ENCODE measurements at regions of chr4 and their contacts with region 1.

Region 1: DNA sequence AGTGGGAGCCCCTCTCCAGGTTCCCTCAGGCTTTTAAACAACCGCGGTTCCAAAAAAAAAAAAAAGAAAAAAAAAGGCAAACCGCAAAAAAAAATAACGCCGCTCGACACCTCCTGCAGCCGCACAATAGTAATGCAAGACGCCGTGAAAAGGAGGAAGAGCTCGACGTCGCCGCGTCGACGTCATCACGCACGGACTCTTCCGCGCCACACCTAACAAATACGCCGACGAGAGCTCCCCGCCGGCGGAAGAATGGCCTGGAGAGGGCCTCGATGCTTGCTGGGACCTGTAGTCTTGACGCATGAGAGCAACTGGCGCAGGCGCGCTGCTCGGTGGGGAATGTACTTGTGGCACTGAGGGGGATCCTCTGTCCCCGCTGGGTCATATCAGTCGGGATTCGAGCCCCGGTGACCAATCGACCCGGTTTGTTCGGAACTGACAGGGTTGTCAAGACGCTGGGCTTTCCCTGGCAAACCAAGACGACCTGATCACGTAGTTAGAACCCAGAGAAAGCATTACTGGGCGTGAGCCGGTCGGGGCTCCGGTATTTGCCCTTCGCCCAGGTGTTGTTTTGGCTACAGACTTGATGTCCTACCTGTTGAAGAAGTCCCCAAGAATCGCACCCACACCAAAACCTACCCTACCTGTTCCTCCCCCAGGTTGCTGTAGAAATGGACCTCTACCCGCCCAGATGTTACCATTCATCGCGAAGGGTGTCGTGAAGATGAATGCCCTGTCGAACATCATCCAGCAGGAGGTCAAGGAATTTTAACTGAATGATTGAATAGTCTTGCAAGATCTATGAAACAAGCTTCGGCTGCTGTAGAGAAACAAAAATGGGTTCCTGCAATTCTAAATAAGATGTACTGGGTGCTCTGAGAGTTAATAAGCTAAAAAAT is at the start of gene CBR4:
- DNase-seq: peak; percentile 99
- H3K4me3 ChIP-seq: peak within 1 kb of the TSS; percentile 49 to 91 (median 90)
- H3K27ac ChIP-seq: peak within 1 kb of the TSS; percentile 65
- H3K4me1 ChIP-seq: peaks cover 19% of the 10 kb centered on the region
- H3K27me3 ChIP-seq: no peaks in the 10 kb centered on the region
- CTCF ChIP-seq: peak; percentile 5 to 35
- POLR2A ChIP-seq: peak; percentile 91
- total RNA-seq, gene CBR4: 23.6 and 26.3 TPM in 2 replicates

Region 2: GRCh38 chr4:168588916-168589531 is 421.4 kb before region 1 on chr4:
- CTCF ChIA-PET with region 1: no interaction called
- POLR2A ChIA-PET with region 1: no interaction called
- dilution Hi-C with region 1: no loop called
- intact Hi-C with region 1: no loop called
- DNase-seq: peak; percentile 72
- H3K4me3 ChIP-seq: no peak overlapping the region
- H3K27ac ChIP-seq: no peak overlapping the region
- H3K4me1 ChIP-seq: peaks cover 14% of the 10 kb centered on the region
- H3K27me3 ChIP-seq: no peaks in the 10 kb centered on the region
- CTCF ChIP-seq: no peak
- POLR2A ChIP-seq: no peak

Region 3: GRCh38 chr4:168831919-168832762 is 178.2 kb before region 1 on chr4:
- CTCF ChIA-PET with region 1: no interaction called
- POLR2A ChIA-PET with region 1: no interaction called
- dilution Hi-C with region 1: no loop called
- intact Hi-C with region 1: no loop called
- DNase-seq: peak; percentile 78
- H3K4me3 ChIP-seq: peak overlapping the region; percentile 72 to 88 (median 81)
- H3K27ac ChIP-seq: peak overlapping the region; percentile 73
- H3K4me1 ChIP-seq: peaks cover 17% of the 10 kb centered on the region
- H3K27me3 ChIP-seq: no peaks in the 10 kb centered on the region
- CTCF ChIP-seq: no peak
- POLR2A ChIP-seq: peak; percentile 94

Region 4: DNA sequence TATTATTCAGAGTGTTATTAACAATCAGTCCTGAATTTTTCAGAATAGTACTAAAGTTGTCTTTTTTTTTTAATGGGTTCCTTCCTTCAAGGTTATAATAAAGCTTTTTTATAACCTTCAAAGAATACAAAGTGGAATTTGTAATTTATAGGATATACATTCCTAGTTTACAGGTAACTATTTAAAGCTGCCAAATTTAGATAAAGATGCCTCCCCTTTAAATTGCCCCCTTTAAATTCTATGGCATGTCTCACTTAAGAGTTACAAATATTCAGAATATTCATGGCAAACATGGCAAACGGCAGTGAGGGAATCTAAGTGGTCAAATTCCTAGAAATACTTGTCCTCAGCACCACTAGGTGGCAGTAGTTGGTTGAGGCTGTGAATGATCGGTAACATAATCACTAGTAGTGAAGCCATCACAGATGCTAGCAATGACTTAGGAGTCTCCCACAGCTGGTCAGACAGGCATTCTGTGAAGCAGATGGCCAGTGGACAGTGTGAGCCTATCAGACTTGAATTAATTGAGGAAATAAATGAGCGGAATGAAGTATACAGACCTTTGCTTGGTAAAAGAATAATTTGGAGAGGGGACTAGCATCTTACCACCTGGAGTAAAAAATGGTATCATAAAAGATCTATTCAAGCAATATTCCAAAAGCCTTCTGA is 86.7 kb before region 1 on chr4:
- CTCF ChIA-PET with region 1: interaction called, 42 read pairs
- POLR2A ChIA-PET with region 1: no interaction called
- dilution Hi-C with region 1: no loop called
- intact Hi-C with region 1: loop called (anchors 1 kb)
- DNase-seq: peak; percentile 67
- H3K4me3 ChIP-seq: no peak overlapping the region
- H3K27ac ChIP-seq: no peak overlapping the region
- H3K4me1 ChIP-seq: no peaks in the 10 kb centered on the region
- H3K27me3 ChIP-seq: no peaks in the 10 kb centered on the region
- CTCF ChIP-seq: peak; percentile 57 to 66
- POLR2A ChIP-seq: no peak

Region 5: DNA sequence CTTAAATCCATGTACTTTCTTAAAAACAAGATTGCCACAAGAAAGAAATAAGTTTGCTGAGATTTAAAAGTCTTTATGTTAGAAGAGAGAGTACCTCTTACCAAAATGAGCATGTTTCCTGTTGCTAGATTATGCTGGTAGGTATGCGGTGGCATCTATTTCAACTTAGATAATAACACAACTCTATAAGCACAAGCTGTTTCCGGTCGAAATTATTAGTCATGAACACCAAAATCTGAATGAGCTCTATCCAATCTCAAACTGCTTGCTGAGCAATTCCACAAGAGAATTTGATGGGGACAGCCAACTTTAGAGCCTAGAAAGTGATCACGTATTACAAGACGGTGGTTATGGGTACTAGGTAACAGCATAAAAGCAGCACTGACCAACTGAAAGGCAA is 49.7 kb before region 1 on chr4:
- CTCF ChIA-PET with region 1: no interaction called
- POLR2A ChIA-PET with region 1: no interaction called
- dilution Hi-C with region 1: no loop called
- intact Hi-C with region 1: no loop called
- DNase-seq: no peak
- H3K4me3 ChIP-seq: no peak overlapping the region
- H3K27ac ChIP-seq: no peak overlapping the region
- H3K4me1 ChIP-seq: no peaks in the 10 kb centered on the region
- H3K27me3 ChIP-seq: no peaks in the 10 kb centered on the region
- CTCF ChIP-seq: no peak
- POLR2A ChIP-seq: no peak

Region 6: GRCh38 chr4:169024762-169025161 is 14.4 kb after region 1 on chr4:
- CTCF ChIA-PET with region 1: interaction called, 22 read pairs
- POLR2A ChIA-PET with region 1: interaction called, 3 read pairs
- dilution Hi-C with region 1: no loop called
- intact Hi-C with region 1: no loop called
- DNase-seq: peak; percentile 68
- H3K4me3 ChIP-seq: no peak overlapping the region
- H3K27ac ChIP-seq: no peak overlapping the region
- H3K4me1 ChIP-seq: no peaks in the 10 kb centered on the region
- H3K27me3 ChIP-seq: no peaks in the 10 kb centered on the region
- CTCF ChIP-seq: peak; percentile 51 to 57
- POLR2A ChIP-seq: no peak

Region 7: DNA sequence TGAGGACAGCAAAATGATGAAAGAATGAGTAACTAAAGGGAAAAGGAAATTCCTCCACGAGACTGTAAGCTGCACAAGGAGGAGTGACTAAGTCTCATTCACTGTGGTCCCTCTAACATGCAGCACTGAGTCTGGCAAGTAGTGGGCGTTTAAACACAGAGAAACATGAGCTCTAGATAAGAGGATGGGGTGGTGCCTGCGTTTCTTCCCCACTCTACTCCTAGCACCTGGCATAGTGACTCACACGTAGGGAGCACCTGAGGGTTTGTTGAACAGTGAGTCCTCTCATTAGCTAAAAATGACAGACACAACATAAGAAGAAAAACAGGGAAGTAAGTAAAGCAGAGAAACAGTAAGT is 105.5 kb after region 1 on chr4:
- CTCF ChIA-PET with region 1: interaction called, 12 read pairs
- POLR2A ChIA-PET with region 1: interaction called, 3 read pairs
- dilution Hi-C with region 1: no loop called
- intact Hi-C with region 1: no loop called
- DNase-seq: peak; percentile 95
- H3K4me3 ChIP-seq: no peak overlapping the region
- H3K27ac ChIP-seq: peak overlapping the region; percentile 77
- H3K4me1 ChIP-seq: peaks cover 32% of the 10 kb centered on the region
- H3K27me3 ChIP-seq: no peaks in the 10 kb centered on the region
- CTCF ChIP-seq: peak; percentile 43 to 52
- POLR2A ChIP-seq: no peak

Region 8: GRCh38 chr4:169311643-169312365 is 301.4 kb after region 1 on chr4:
- CTCF ChIA-PET with region 1: interaction called, 9 read pairs
- POLR2A ChIA-PET with region 1: no interaction called
- dilution Hi-C with region 1: no loop called
- intact Hi-C with region 1: loop called (anchors 5 kb)
- DNase-seq: peak; percentile 57
- H3K4me3 ChIP-seq: no peak overlapping the region
- H3K27ac ChIP-seq: no peak overlapping the region
- H3K4me1 ChIP-seq: peaks cover 13% of the 10 kb centered on the region
- H3K27me3 ChIP-seq: no peaks in the 10 kb centered on the region
- CTCF ChIP-seq: peak; percentile 60 to 66
- POLR2A ChIP-seq: no peak

Region 9: DNA sequence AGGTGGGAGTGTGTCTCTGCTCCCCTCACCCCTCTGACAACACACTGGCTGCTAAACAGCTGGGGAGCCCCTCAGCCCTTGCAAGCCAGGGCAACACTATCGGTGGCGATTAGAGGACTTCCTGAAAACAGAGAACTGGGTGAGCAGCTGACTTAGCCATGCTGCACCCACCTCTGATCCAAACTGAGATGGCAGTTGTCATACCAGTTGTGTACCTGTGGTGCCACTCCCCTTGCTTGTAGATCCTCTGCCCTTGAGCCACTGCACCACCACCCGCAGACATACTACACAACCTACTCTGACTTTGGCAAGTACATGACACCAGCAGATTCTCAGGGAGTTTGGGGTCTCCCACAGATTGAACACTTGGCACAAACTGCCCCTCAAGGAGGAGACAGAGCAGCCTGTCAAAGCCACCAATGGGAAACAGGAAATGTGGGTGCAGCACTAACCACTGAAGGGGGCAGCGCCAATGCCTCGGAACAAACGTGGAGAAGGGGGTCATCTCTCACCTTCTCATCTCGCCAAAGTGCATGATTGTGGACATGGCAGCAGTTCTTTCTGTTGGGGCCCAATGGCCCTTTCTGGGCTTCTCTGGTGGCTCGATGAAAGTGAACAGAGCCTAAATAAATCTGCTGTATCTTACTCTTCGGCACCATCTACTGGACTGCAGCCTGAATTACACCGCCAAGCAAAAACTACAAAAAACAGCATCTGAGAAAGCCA is 482.2 kb after region 1 on chr4:
- CTCF ChIA-PET with region 1: interaction called, 10 read pairs
- POLR2A ChIA-PET with region 1: interaction called, 7 read pairs
- dilution Hi-C with region 1: no loop called
- intact Hi-C with region 1: no loop called
- DNase-seq: peak; percentile 52
- H3K4me3 ChIP-seq: no peak overlapping the region
- H3K27ac ChIP-seq: no peak overlapping the region
- H3K4me1 ChIP-seq: no peaks in the 10 kb centered on the region
- H3K27me3 ChIP-seq: no peaks in the 10 kb centered on the region
- CTCF ChIP-seq: peak; percentile 70 to 72
- POLR2A ChIP-seq: no peak